ENCODE measurements at regions of chr1 and their contacts with region 1.

Region 1: GRCh38 chr1:89843281-89844121 is 22.7 kb downstream of the LRRC8D start:
- DNase-seq: peak; percentile 68 to 82 (median 78)
- ATAC-seq: peak; percentile 93
- H3K4me3 ChIP-seq: peak overlapping the region; percentile 69
- H3K4me3 Mint-ChIP-seq: peak overlapping the region; percentile 88 to 97 (median 96)
- H3K27ac ChIP-seq: peak overlapping the region; percentile 87
- H3K27ac Mint-ChIP-seq: peak overlapping the region; percentile 83 to 98 (median 94)
- H3K4me1 ChIP-seq: peaks cover 20 to 30% of the 10 kb centered on the region in 2 donors
- H3K4me1 Mint-ChIP-seq: peaks cover 41 to 58% (median 53%) of the 10 kb centered on the region in 7 donors
- H3K27me3 ChIP-seq: no peaks in the 10 kb centered on the region
- H3K27me3 Mint-ChIP-seq: no peaks in the 10 kb centered on the region

Region 2: DNA sequence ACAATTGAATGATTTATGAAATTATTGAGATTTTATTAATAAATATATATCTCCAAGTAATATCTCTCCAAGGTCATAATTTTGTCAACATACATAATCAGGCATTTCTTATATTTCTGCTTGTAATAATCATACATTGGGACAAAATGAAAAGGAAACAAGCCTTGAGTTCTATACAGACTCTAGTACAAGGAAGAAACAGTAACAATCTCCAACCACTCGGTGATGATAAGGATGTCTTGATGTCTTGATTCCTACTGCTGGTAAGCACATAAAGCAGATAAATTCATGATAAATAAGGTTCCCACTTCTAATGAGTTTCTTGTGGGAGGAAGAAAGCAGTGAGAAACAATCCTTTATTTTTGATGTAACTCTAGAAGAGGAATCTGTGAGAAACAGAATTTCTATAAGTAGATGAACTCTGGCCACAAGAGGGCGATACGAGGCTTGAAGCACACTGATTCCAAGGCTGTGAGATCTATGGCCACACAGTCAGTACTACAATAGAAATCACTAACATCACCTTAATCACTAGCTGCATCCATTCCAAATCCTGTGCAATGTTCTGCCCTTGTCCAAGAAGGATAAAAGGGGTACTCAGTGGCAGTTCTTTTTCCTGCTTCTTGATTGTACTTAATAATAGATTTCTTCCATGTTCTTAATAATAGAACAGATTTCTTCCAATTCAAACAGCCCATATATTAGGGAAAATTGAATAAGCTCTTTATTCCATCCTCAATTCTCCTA is 360.3 kb before region 1 on chr1:
- CTCF ChIA-PET with region 1: no interaction called
- POLR2A ChIA-PET with region 1: no interaction called
- intact Hi-C with region 1: loop called in 1 of 2 experiments (anchors 1 kb)
- DNase-seq: peak; percentile 37 to 77 (median 67)
- ATAC-seq: peak; percentile 97
- H3K4me3 ChIP-seq: no peak overlapping the region
- H3K4me3 Mint-ChIP-seq: no peak overlapping the region
- H3K27ac ChIP-seq: no peak overlapping the region
- H3K27ac Mint-ChIP-seq: no peak overlapping the region
- H3K4me1 ChIP-seq: no peaks in the 10 kb centered on the region
- H3K4me1 Mint-ChIP-seq: peaks cover 0 to 18% (median 9%) of the 10 kb centered on the region in 7 donors
- H3K27me3 ChIP-seq: no peaks in the 10 kb centered on the region
- H3K27me3 Mint-ChIP-seq: peaks cover 0 to 5% (median 0%) of the 10 kb centered on the region in 5 donors

Region 3: GRCh38 chr1:89780721-89781120 is 62.8 kb before region 1 on chr1:
- CTCF ChIA-PET with region 1: interaction called, 3 read pairs
- POLR2A ChIA-PET with region 1: no interaction called
- intact Hi-C with region 1: loop called in 1 of 2 experiments (anchors 2 kb)
- DNase-seq: peak in 5 of 9 donors; percentile 38 to 56 (median 41)
- ATAC-seq: peak; percentile 80
- H3K4me3 ChIP-seq: no peak overlapping the region
- H3K4me3 Mint-ChIP-seq: peak overlapping the region in 2 of 10 donors; percentile 5 to 26
- H3K27ac ChIP-seq: no peak overlapping the region
- H3K27ac Mint-ChIP-seq: peak overlapping the region in 2 of 9 donors; percentile 34 to 53
- H3K4me1 ChIP-seq: peaks cover 0 to 13% of the 10 kb centered on the region in 2 donors
- H3K4me1 Mint-ChIP-seq: peaks cover 17 to 30% (median 27%) of the 10 kb centered on the region in 7 donors
- H3K27me3 ChIP-seq: no peaks in the 10 kb centered on the region
- H3K27me3 Mint-ChIP-seq: no peaks in the 10 kb centered on the region

Region 4: DNA sequence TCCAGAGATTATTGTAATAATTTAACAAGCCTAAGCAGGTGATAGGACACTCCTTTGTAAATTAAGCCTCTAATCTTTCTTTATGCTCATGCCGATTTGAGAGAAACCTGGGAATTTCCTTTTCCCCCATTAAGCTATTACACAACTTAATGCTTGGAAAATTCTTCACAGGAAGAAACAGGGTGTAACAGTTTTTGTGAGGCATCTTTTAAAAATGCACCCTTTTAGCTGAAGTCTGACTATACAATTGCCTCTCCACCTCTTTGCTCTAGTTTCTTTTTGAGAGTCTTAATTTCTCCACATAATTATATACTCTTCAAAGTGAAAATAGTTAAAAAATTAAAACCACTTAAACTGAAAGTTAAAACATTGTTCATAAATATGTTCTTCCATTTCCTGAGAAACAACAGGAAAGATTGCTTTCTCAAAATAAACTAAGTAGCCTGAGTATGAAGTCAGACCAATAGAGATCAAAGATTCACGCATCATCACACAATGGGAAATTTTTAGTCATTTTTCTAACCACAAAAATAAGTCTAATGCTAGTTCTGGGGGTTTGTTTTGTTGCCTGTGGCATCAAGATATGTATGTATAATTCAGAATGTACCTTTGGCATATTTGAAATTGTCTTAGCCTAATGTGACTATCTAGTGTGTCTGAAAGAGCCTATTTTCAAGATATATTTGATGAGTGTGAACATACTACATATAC is 12.1 kb after region 1 on chr1:
- CTCF ChIA-PET with region 1: interaction called, 8 read pairs
- POLR2A ChIA-PET with region 1: interaction called, 22 read pairs
- intact Hi-C with region 1: loop called (anchors 1 kb)
- DNase-seq: peak in 7 of 9 donors; percentile 45 to 80 (median 67)
- ATAC-seq: peak; percentile 91
- H3K4me3 ChIP-seq: peak overlapping the region; percentile 2
- H3K4me3 Mint-ChIP-seq: peak overlapping the region in 5 of 10 donors; percentile 35 to 87 (median 53)
- H3K27ac ChIP-seq: peak overlapping the region; percentile 72
- H3K27ac Mint-ChIP-seq: no peak overlapping the region
- H3K4me1 ChIP-seq: peaks cover 21 to 29% of the 10 kb centered on the region in 2 donors
- H3K4me1 Mint-ChIP-seq: peaks cover 6 to 31% (median 8%) of the 10 kb centered on the region in 7 donors
- H3K27me3 ChIP-seq: no peaks in the 10 kb centered on the region
- H3K27me3 Mint-ChIP-seq: no peaks in the 10 kb centered on the region

Region 5: GRCh38 chr1:89887270-89887669 is 43.8 kb after region 1 on chr1:
- CTCF ChIA-PET with region 1: interaction called, 3 read pairs
- POLR2A ChIA-PET with region 1: no interaction called
- intact Hi-C with region 1: loop called in 1 of 2 experiments (anchors 1 kb)
- DNase-seq: no peak
- ATAC-seq: no peak
- H3K4me3 ChIP-seq: no peak overlapping the region
- H3K4me3 Mint-ChIP-seq: no peak overlapping the region
- H3K27ac ChIP-seq: no peak overlapping the region
- H3K27ac Mint-ChIP-seq: no peak overlapping the region
- H3K4me1 ChIP-seq: no peaks in the 10 kb centered on the region
- H3K4me1 Mint-ChIP-seq: peaks cover 15 to 50% (median 35%) of the 10 kb centered on the region in 7 donors
- H3K27me3 ChIP-seq: no peaks in the 10 kb centered on the region
- H3K27me3 Mint-ChIP-seq: no peaks in the 10 kb centered on the region

Region 6: DNA sequence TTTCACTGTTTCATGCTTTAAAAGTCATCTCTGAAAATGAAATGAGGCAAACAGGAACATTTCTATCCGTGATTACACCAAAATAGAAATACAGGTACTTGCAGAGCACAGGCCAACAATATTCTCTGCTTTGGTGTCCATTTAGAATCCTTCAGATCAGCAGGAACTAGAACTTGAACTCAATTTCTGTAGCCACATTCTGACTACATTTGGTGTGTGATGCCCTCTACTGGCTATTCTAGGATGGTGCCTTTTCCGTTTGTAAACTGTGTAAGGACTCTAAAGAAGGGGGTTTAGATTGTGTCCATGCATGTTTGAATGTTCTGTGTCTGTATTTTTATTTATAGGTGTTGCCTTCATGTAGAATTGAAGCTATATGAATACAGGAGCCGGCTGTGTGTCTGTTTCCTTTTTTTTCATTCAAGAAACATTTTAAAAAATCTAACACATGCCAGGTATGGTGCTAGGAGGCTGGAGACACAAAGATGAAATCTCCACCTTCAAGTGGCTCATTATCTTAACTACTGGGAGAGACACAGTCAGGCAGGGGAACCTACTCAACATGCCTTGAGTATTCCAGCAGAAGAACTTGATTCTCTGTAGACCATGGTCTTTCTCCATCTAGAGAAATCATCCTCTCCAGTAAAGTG is 143.8 kb after region 1 on chr1:
- CTCF ChIA-PET with region 1: interaction called, 17 read pairs
- POLR2A ChIA-PET with region 1: interaction called, 4 read pairs
- intact Hi-C with region 1: loop called (anchors 1 kb)
- DNase-seq: peak in 8 of 9 donors; percentile 48 to 76 (median 70)
- ATAC-seq: peak; percentile 97
- H3K4me3 ChIP-seq: no peak overlapping the region
- H3K4me3 Mint-ChIP-seq: no peak overlapping the region
- H3K27ac ChIP-seq: no peak overlapping the region
- H3K27ac Mint-ChIP-seq: no peak overlapping the region
- H3K4me1 ChIP-seq: no peaks in the 10 kb centered on the region
- H3K4me1 Mint-ChIP-seq: no peaks in the 10 kb centered on the region
- H3K27me3 ChIP-seq: no peaks in the 10 kb centered on the region
- H3K27me3 Mint-ChIP-seq: peaks cover 0 to 13% (median 4%) of the 10 kb centered on the region in 5 donors